H1 (cell line): ENCODE measurements at regions of chr13 and their contacts with region 1.

Region 1: GRCh38 chr13:95378603-95379002 is 77.4 kb upstream of the ABCC4 start:
- DNase-seq: no peak
- H3K4me3 ChIP-seq: no peak overlapping the region
- H3K27ac ChIP-seq: no peak overlapping the region
- H3K4me1 ChIP-seq: peaks cover 0 to 6% (median 0%) of the 10 kb centered on the region in 4 experiments; a peak in 1 of 7 replicates
- H3K27me3 ChIP-seq: no peaks in the 10 kb centered on the region
- CTCF ChIP-seq: no peak
- EP300 ChIP-seq: no peak
- POLR2A ChIP-seq: no peak
- RAD21 ChIP-seq: no peak

Region 2: GRCh38 chr13:95328386-95328785 is 50.2 kb before region 1 on chr13:
- CTCF ChIA-PET with region 1: interaction called, 11 read pairs
- POLR2A ChIA-PET with region 1: no interaction called
- DNase-seq: no peak
- H3K4me3 ChIP-seq: no peak overlapping the region
- H3K27ac ChIP-seq: no peak overlapping the region
- H3K4me1 ChIP-seq: no peaks in the 10 kb centered on the region
- H3K27me3 ChIP-seq: no peaks in the 10 kb centered on the region
- CTCF ChIP-seq: no peak
- EP300 ChIP-seq: no peak
- POLR2A ChIP-seq: no peak
- RAD21 ChIP-seq: no peak

Region 3: DNA sequence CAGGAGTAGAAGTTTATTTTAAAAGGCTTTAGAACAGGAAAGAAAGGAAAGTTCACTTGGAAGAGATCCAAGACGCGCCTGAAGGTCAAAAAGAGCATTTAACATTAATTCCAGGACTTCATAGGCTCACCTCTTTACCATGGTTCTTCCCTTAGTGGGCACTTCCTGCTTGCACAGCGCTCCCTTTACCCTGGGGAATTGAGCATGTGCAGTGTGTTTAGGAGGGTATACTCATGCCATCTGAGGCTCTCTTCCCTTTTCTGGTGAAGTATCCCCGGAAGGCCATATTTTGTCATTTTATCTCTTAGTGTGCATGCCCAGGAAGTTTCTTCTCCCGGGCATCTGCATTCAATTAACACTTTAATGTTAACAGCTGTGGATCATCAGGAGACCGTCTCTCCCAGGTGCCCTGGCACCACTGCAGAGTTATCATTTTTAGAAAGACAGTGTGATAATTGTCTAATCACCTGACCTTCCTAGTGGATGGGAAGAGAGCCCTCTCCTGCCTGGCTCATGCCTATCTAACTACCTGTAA is 11.2 kb before region 1 on chr13:
- CTCF ChIA-PET with region 1: interaction called, 29 read pairs
- POLR2A ChIA-PET with region 1: no interaction called
- DNase-seq: no peak
- H3K4me3 ChIP-seq: no peak overlapping the region
- H3K27ac ChIP-seq: no peak overlapping the region
- H3K4me1 ChIP-seq: no peaks in the 10 kb centered on the region
- H3K27me3 ChIP-seq: no peaks in the 10 kb centered on the region
- CTCF ChIP-seq: no peak
- EP300 ChIP-seq: no peak
- POLR2A ChIP-seq: no peak
- RAD21 ChIP-seq: no peak